A549 (cell line): ENCODE measurements at regions of chr16 and their contacts with region 1.

Region 1: DNA sequence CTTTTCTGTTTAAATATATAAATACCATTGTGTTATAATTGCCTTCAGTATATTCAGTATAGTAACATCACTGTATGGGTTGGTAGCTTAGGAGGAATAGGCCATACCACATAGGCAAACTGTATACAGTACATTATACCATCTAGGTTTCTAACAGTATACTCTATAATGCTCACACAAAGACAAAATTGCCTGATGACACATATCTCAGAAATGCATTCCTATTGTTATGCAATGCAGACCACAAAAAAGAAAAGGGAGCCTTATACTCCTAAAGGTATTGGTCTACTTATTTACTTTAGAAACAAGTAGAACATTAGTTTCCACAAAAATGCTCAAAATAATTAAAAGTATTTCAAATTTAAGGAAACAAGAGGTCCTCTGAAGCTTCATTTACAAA is 47.9 kb downstream of the SETD6 start:
- DNase-seq: no peak
- ATAC-seq: peak in 1 of 2 experiments; percentile 58; a peak in 3 of 6 replicates
- H3K4me3 ChIP-seq: no peak overlapping the region
- H3K27ac ChIP-seq: no peak overlapping the region
- H3K4me1 ChIP-seq: peaks cover 9% of the 10 kb centered on the region; the same call in 2 of the 3 replicates
- CTCF ChIP-seq: no peak
- EP300 ChIP-seq: no peak
- POLR2A ChIP-seq: no peak
- RAD21 ChIP-seq: no peak

Region 2: GRCh38 chr16:58299757-58300349 is 263.4 kb before region 1 on chr16:
- CTCF ChIA-PET with region 1: no interaction called
- POLR2A ChIA-PET with region 1: no interaction called
- DNase-seq: peak in 1 of 2 experiments; percentile 12
- ATAC-seq: no peak
- H3K4me3 ChIP-seq: no peak overlapping the region
- H3K27ac ChIP-seq: no peak overlapping the region
- H3K4me1 ChIP-seq: no peaks in the 10 kb centered on the region
- CTCF ChIP-seq: peak; percentile 23; the same call in 1 of the 3 replicates
- EP300 ChIP-seq: no peak
- POLR2A ChIP-seq: no peak
- RAD21 ChIP-seq: peak in 1 of 2 experiments; percentile 45; a peak in 2 of 5 replicates

Region 3: DNA sequence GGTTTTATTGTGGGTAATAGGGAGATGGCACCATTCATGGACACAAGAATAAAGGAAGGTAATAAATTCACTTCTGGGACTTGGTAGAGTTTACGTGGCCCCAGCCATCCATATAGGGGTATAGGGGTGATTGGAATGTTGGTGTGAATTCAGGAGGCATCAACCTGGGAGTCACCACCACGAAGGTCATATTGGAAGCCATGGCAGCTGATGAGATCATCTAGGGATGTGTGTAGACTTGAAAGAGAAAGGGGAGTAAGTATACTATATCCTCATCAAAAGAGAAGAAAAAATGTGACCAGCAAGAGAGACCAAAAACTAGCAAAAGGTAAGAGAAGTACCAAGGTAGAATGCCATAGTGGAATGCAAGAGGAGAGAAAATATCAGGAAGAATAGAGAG is 197.6 kb before region 1 on chr16:
- CTCF ChIA-PET with region 1: no interaction called
- POLR2A ChIA-PET with region 1: no interaction called
- DNase-seq: no peak
- ATAC-seq: no peak
- H3K4me3 ChIP-seq: no peak overlapping the region
- H3K27ac ChIP-seq: no peak overlapping the region
- H3K4me1 ChIP-seq: peaks cover 3% of the 10 kb centered on the region; the same call in 1 of the 3 replicates
- CTCF ChIP-seq: no peak
- EP300 ChIP-seq: no peak
- POLR2A ChIP-seq: no peak
- RAD21 ChIP-seq: no peak

Region 4: GRCh38 chr16:58533751-58534470 is 29.3 kb before region 1 on chr16:
- CTCF ChIA-PET with region 1: no interaction called
- POLR2A ChIA-PET with region 1: interaction called, 14 read pairs
- DNase-seq: no peak
- ATAC-seq: no peak
- H3K4me3 ChIP-seq: no peak overlapping the region
- H3K27ac ChIP-seq: no peak overlapping the region
- H3K4me1 ChIP-seq: no peaks in the 10 kb centered on the region
- CTCF ChIP-seq: no peak
- EP300 ChIP-seq: no peak
- POLR2A ChIP-seq: no peak
- RAD21 ChIP-seq: no peak